Ascending aorta (tissue), 2 donors: ENCODE measurements at regions of chr12 and their contacts with region 1.

Region 1: DNA sequence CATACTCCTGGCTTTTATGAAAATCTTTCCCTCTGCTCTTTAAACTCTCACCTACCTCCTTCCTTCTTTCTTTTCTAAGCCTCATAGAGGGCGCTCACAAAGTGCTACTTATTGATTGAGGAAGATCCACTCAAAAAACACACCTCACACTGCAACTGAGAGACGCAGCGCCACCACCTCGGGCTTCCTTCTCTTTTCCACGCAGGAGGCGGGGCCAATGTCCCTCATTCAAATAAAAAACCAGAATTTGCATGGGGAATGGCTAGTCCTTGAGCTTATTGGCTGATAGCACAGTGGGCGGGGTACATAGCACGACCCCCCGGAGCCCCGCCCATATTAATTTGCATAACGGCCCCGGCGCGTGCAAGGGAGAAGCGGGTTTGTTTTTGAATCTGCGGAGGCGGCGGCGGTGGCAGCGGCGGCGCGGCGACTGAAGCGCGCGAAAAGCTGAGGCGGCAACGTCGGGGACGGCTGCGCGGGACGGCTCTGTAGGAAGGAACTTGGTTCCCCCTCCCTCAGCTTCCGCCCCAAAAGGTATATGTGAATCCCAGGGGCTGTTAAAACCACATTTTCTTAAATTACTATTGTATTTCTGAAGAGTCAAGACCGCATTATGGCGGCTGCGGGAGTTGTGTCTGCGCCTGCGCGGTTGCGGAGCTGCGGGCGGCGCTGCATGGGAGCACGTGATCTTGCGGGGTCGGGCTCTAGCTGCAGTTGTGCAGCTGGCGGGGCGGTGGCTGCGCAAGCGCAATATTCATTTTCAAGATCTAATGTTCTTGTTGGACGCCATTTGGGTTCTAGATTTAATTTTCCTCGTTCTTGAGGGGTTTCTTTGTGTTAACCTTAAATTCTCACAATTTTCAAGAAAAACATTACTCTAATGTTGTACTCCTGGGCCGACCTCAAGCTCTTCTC is at the start of gene ATF7IP:
- DNase-seq: peak; percentile 93 to 98
- H3K4me3 ChIP-seq: peak within 1 kb of the TSS; percentile 73 to 84
- H3K27ac ChIP-seq: peak within 1 kb of the TSS; percentile 96 to 98
- H3K4me1 ChIP-seq: peaks cover 0 to 5% of the 10 kb centered on the region in 2 donors
- H3K27me3 ChIP-seq: no peaks in the 10 kb centered on the region
- CTCF ChIP-seq: peak in 1 of 3 experiments; percentile 18
- total RNA-seq, gene ATF7IP: 58.2 TPM

Region 2: GRCh38 chr12:14393751-14394150 is 28.2 kb after region 1 on chr12:
- intact Hi-C with region 1: no loop called
- DNase-seq: no peak
- H3K4me3 ChIP-seq: peak overlapping the region; percentile 14 to 49
- H3K27ac ChIP-seq: peak overlapping the region; percentile 31 to 65
- H3K4me1 ChIP-seq: peaks cover 0 to 3% of the 10 kb centered on the region in 2 donors
- H3K27me3 ChIP-seq: no peaks in the 10 kb centered on the region
- CTCF ChIP-seq: no peak

Region 3: DNA sequence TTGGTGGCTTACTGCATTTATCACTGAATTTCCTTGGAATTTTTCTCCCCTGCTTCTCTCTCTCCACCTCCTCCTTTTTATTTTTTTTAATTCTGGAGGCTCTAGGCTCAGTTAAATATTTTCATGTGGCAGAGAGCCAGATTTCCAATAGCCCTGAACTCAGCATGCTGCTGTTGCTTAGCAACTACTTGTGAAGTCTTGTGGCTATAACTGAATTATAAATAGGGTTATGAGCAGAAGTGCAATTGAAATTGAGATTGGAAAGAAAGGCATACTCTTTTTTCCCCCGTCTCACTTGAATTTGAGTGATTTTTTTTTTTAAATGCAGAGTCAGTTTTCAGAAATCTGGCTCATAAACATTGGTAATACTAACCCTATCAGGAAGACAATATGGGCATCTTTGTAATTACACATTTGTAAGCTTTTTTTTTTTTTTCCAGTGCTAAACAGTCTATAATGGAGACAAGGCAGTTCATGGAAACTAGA is 38.2 kb after region 1 on chr12:
- intact Hi-C with region 1: loop called (anchors 5 kb)
- DNase-seq: peak in 1 of 2 donors; percentile 69
- H3K4me3 ChIP-seq: no peak overlapping the region
- H3K27ac ChIP-seq: peak overlapping the region; percentile 26 to 44
- H3K4me1 ChIP-seq: peaks cover 0 to 10% of the 10 kb centered on the region in 2 donors
- H3K27me3 ChIP-seq: no peaks in the 10 kb centered on the region
- CTCF ChIP-seq: no peak

Region 4: DNA sequence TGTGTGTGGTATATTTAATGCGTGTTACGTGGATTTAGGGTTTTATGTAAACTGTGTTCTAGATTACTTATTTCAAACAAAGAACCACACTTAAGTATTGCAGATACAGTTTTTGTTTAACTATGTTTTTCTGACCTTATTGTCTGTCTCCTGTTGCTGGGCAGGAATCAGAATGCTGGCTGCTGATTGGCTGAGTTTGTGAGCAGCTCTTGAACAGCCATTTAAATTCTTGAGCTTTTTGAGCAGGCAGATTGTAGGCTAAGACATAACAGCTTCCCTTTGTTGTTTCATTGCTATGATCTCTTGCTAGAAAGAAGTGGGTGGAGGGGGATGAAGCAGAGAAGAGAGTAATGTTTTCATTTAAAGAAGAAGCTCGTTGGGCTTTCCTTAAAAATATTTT is 52.2 kb after region 1 on chr12:
- intact Hi-C with region 1: loop called (anchors 5 kb)
- DNase-seq: peak; percentile 24 to 72
- H3K4me3 ChIP-seq: no peak overlapping the region
- H3K27ac ChIP-seq: no peak overlapping the region
- H3K4me1 ChIP-seq: peaks cover 0 to 7% of the 10 kb centered on the region in 2 donors
- H3K27me3 ChIP-seq: no peaks in the 10 kb centered on the region
- CTCF ChIP-seq: no peak

Region 5: DNA sequence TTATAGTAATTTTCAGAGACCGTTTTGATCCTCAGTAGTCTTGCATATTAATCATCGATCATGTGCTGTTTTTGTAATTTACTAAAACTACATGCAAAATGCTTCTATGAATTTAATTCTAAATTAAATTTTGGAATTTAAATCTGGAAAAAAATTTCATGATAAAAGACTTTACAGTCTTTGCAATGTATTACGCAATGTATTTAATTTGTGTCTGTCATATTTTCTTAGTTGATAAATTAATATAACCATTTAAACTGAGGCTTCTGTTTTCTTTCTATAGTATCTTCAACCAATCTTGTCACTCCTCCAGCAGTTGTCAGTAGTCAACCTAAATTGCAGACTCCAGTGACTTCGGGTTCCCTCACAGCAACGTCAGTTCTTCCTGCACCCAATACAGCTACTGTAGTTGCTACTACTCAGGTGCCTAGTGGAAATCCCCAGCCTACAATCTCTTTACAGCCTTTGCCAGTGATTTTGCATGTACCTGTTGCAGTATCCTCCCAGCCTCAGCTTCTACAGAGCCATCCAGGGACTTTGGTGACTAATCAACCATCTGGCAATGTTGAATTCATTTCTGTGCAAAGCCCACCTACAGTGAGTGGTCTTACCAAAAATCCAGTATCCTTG is 94.8 kb after region 1 on chr12:
- intact Hi-C with region 1: no loop called
- DNase-seq: no peak
- H3K4me3 ChIP-seq: no peak overlapping the region
- H3K27ac ChIP-seq: no peak overlapping the region
- H3K4me1 ChIP-seq: peaks cover 0 to 3% of the 10 kb centered on the region in 2 donors
- H3K27me3 ChIP-seq: no peaks in the 10 kb centered on the region
- CTCF ChIP-seq: no peak

Region 6: GRCh38 chr12:14731821-14732220 is 366.3 kb after region 1 on chr12:
- intact Hi-C with region 1: no loop called
- DNase-seq: no peak
- H3K4me3 ChIP-seq: no peak overlapping the region
- H3K27ac ChIP-seq: no peak overlapping the region
- H3K4me1 ChIP-seq: no peaks in the 10 kb centered on the region
- H3K27me3 ChIP-seq: no peaks in the 10 kb centered on the region
- CTCF ChIP-seq: no peak